ENCODE measurements at regions of chr11 and their contacts with region 1.

Region 1: GRCh38 chr11:27485930-27486773 is 13.6 kb upstream of the LGR4 start:
- DNase-seq: peak; percentile 66
- ATAC-seq: peak; percentile 67
- H3K4me3 Mint-ChIP-seq: no peak overlapping the region
- H3K27ac Mint-ChIP-seq: no peak overlapping the region
- H3K4me1 Mint-ChIP-seq: no peaks in the 10 kb centered on the region
- H3K27me3 Mint-ChIP-seq: no peaks in the 10 kb centered on the region

Region 2: DNA sequence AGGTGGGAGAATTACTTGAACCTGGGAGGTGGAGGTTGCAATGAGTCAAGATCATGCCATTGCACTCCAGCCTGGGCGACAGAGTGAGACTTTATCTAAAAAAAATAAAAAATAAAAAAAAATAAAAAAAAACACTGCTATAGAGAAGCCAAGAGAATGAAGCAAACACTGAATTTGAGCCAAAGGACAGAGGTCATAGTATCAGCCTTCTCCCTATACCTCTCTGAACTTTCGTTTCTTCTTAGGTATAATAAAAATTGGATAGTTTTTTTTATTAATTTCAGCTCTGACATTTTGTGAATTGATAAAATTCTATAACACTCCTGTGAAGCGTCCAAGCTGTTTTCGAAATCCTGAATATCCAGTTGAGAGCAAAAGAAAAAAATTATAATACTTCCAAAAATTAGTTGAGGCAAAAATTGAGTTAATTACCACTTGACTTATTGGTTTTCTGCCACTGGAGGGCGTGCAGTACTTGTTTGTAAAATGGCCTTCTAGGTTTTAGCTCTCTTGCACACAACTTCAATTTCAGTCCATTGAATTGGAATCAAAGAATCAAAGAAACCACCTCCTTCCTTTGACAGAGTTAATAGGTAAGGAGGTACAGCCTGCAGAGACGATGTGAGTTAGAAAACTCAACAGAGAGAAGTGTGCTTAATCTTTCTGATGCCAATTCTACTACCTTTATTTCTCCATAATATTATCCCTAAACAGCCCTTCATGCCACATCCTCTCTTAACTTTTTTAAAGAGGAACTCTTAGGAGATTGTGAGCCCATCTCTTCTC is 302.3 kb before region 1 on chr11:
- CTCF ChIA-PET with region 1: interaction called, 32 read pairs
- POLR2A ChIA-PET with region 1: no interaction called
- DNase-seq: peak; percentile 42
- ATAC-seq: no peak
- H3K4me3 Mint-ChIP-seq: no peak overlapping the region
- H3K27ac Mint-ChIP-seq: no peak overlapping the region
- H3K4me1 Mint-ChIP-seq: no peaks in the 10 kb centered on the region
- H3K27me3 Mint-ChIP-seq: peaks cover 4% of the 10 kb centered on the region

Region 3: GRCh38 chr11:27443746-27444507 is 42.2 kb before region 1 on chr11:
- CTCF ChIA-PET with region 1: no interaction called
- POLR2A ChIA-PET with region 1: no interaction called
- DNase-seq: no peak
- ATAC-seq: no peak
- H3K4me3 Mint-ChIP-seq: no peak overlapping the region
- H3K27ac Mint-ChIP-seq: no peak overlapping the region
- H3K4me1 Mint-ChIP-seq: no peaks in the 10 kb centered on the region
- H3K27me3 Mint-ChIP-seq: peaks cover 7% of the 10 kb centered on the region

Region 4: GRCh38 chr11:27497284-27497866 is 11.2 kb after region 1 on chr11:
- CTCF ChIA-PET with region 1: interaction called, 47 read pairs
- POLR2A ChIA-PET with region 1: no interaction called
- DNase-seq: no peak
- ATAC-seq: no peak
- H3K4me3 Mint-ChIP-seq: no peak overlapping the region
- H3K27ac Mint-ChIP-seq: no peak overlapping the region
- H3K4me1 Mint-ChIP-seq: peaks cover 3% of the 10 kb centered on the region
- H3K27me3 Mint-ChIP-seq: no peaks in the 10 kb centered on the region

Measured in activated CD8-positive, alpha-beta T cell treated with anti-CD3 and anti-CD28 coated beads, Interleukin-2, amount 10 ng/mL, durations not matched to agents 7 days and 5 days (primary cell).